Heart left ventricle (tissue), 16 donors: ENCODE measurements at regions of chr10 and their contacts with region 1.

Region 1: DNA sequence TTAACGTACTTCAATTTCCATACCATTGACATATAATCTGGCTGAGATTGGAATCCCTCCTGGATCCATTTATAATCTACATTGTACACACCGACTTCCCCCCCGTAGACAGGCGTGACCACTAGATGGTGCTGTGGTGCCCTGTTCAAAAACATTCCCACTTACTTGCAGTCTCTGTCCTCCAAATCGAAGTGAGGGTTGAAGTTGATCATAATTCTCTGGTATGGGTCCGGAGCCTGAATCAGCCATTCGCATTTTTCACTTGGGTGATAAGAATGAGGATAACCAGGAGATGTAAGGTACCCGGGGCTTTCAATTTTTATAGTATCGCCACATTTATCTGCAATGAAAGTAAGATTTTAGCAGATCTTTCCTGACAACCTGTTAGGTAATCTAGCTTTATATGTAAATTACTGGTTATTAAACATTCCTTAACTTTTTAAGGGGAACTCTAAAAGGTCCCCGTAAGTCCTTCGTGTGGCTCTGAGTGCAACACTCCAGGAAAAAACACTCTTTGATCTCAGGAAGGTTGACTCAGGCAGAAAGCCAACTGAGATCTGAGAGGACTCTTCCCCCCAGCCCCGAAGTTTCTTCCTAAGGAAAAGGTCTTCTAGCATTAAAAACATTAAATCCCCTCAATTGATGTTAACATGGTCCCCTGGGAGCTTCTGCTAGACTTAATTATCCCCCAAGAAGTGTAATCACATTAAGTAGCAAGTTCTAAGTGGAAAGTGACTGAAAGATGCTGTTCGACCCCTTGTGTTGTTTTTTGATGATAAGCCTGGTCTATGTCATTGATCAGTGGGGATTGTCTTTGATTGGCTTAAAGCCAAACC is 3.7 kb downstream of the NRP1 start:
- DNase-seq: peak; percentile 87 to 89 (median 87)
- ATAC-seq: peak; percentile 9 to 35 (median 25)
- H3K4me3 ChIP-seq: peak overlapping the region; percentile 53 to 92 (median 88)
- H3K27ac ChIP-seq: peak overlapping the region in 11 of 12 donors; percentile 95 to 100 (median 98)
- H3K4me1 ChIP-seq: peaks cover 3 to 53% (median 40%) of the 10 kb centered on the region in 12 donors
- H3K27me3 ChIP-seq: no peaks in the 10 kb centered on the region
- CTCF ChIP-seq: peak; percentile 87 to 96 (median 91)
- POLR2A ChIP-seq: no peak

Region 2: GRCh38 chr10:33193057-33193700 is 137.6 kb before region 1 on chr10:
- intact Hi-C with region 1: loop called in 9 of 10 experiments (anchors 2 to 10 kb)
- DNase-seq: peak; percentile 83 to 90 (median 85)
- ATAC-seq: peak; percentile 73 to 86 (median 82)
- H3K4me3 ChIP-seq: no peak overlapping the region
- H3K27ac ChIP-seq: peak overlapping the region; percentile 25 to 75 (median 52)
- H3K4me1 ChIP-seq: peaks cover 4 to 57% (median 41%) of the 10 kb centered on the region in 12 donors
- H3K27me3 ChIP-seq: no peaks in the 10 kb centered on the region
- CTCF ChIP-seq: peak; percentile 66 to 95 (median 83)
- POLR2A ChIP-seq: no peak

Region 3: GRCh38 chr10:33661580-33662336 is 331.0 kb after region 1 on chr10:
- intact Hi-C with region 1: loop called in 3 of 10 experiments (anchors 5 to 10 kb)
- DNase-seq: peak; percentile 69 to 88 (median 82)
- ATAC-seq: peak; percentile 52 to 90 (median 86)
- H3K4me3 ChIP-seq: peak overlapping the region in 3 of 12 donors; percentile 1 to 15 (median 13)
- H3K27ac ChIP-seq: peak overlapping the region in 10 of 12 donors; percentile 7 to 86 (median 28)
- H3K4me1 ChIP-seq: peaks cover 0 to 47% (median 20%) of the 10 kb centered on the region in 12 donors
- H3K27me3 ChIP-seq: no peaks in the 10 kb centered on the region
- CTCF ChIP-seq: no peak
- POLR2A ChIP-seq: no peak

Region 4: DNA sequence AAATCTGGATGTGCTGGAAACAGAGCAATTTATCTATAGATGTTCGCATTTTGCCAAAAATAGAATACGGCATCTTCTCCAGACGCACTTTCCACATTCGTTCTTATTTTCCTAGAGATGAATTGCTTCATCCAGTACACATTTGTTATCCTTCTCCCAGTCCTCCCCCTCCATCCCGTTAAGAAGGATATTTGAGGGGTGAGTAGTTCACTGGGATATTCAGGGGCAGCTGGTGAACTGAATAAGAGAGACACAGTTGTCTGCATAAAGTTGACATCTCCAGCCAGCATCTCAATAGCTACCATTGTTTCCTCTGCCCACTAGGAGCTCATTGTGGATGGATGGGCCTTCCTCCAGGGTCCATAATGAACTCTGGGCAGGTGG is 460.5 kb after region 1 on chr10:
- intact Hi-C with region 1: no loop called
- DNase-seq: no peak
- ATAC-seq: peak in 1 of 4 donors; percentile 88
- H3K4me3 ChIP-seq: no peak overlapping the region
- H3K27ac ChIP-seq: no peak overlapping the region
- H3K4me1 ChIP-seq: peaks cover 0 to 15% (median 0%) of the 10 kb centered on the region in 12 donors
- H3K27me3 ChIP-seq: no peaks in the 10 kb centered on the region
- CTCF ChIP-seq: no peak
- POLR2A ChIP-seq: no peak

Region 5: DNA sequence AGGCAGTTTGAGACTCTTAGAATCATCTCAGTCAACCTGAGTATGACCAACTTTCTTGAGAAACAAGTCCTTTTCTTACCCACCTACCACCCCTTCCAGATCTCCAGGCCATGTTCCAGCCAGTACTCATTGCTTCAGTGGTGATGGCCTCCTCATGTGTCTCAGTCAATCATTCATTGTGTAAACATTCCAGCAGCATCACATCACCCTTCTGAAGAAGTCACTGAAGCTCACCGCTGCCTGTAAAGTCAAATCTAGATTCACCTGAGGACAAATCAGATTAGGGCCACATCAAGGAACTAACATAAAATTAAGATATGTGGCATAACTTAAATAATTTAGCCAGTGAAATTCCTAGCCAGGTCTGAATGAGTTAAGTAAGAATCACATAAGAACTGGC is 471.0 kb after region 1 on chr10:
- intact Hi-C with region 1: loop called in 8 of 10 experiments (anchors 2 to 10 kb)
- DNase-seq: no peak
- ATAC-seq: no peak
- H3K4me3 ChIP-seq: no peak overlapping the region
- H3K27ac ChIP-seq: peak overlapping the region in 1 of 12 donors; percentile 72
- H3K4me1 ChIP-seq: peaks cover 0 to 23% (median 3%) of the 10 kb centered on the region in 12 donors
- H3K27me3 ChIP-seq: no peaks in the 10 kb centered on the region
- CTCF ChIP-seq: no peak
- POLR2A ChIP-seq: no peak

Region 6: DNA sequence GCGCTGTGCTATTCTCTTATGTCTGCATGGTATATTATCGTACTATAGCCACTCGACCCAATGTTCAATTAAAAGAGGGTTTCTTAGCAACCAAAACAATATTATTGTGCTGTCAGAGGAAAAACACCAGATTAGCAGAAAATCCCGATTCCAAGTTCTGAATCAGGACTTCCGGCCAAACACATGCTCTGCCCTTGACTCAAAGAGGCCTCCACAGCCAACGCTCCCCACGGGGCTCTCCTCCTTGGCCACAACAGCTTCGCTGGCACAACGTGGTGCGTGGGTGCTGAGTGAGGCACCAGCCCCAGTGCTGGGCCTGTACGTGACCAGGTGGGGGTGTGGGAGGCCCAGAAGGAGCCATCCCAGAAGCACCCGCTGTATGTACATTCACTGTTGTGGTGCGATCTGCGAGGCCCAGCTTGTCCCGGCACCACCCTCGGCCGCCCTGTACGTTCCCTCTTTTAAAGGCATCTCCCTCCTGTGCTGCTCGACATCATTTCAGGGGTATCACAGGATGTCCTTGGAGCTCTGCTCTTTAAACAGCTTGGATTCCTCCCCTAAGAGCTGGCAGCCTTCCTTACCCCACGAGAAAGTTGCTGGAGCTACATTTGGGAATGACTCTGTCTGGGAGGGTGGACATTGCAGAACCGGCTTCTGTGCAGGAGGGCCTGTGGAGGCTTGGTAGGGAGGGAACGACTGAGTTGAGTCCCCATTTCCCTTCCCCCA is 748.1 kb after region 1 on chr10:
- intact Hi-C with region 1: loop called in 1 of 10 experiments (anchors 2 kb)
- DNase-seq: peak; percentile 44 to 84 (median 76)
- ATAC-seq: peak; percentile 70 to 85 (median 80)
- H3K4me3 ChIP-seq: no peak overlapping the region
- H3K27ac ChIP-seq: peak overlapping the region in 7 of 12 donors; percentile 15 to 70 (median 41)
- H3K4me1 ChIP-seq: peaks cover 0 to 41% (median 12%) of the 10 kb centered on the region in 12 donors
- H3K27me3 ChIP-seq: no peaks in the 10 kb centered on the region
- CTCF ChIP-seq: no peak
- POLR2A ChIP-seq: no peak

Region 7: DNA sequence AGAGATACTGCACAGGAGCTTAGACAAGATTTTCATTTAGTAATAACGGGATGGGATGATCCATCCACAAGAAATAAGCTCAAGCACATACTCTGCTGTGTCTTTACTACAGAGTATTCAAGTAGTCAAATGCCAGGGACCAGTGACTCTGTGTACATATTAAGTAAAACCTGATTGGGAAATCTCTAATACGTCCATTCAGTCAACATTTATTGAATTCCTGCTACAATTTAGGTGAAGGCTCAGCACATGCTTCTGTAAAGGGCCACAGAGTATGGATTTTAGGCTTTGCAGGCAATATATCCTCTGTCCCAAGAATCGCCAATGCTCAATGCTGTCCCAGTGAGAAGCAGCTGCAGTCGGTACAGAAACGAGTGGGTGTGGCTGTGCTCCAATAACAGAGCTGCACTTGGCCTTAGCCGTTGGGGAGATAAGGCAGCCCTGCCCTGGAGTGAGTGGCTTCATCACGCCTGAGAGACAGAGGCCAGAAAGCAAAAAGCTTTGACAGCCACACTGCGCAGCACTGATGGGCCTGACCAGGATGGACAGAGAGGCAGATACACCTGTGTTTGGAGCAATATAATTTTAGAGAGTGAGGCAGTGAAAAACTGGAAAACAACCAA is 1297.5 kb after region 1 on chr10:
- intact Hi-C with region 1: loop called in 2 of 10 experiments (anchors 5 to 10 kb)
- DNase-seq: peak; percentile 76 to 89 (median 81)
- ATAC-seq: peak; percentile 90 to 98 (median 96)
- H3K4me3 ChIP-seq: no peak overlapping the region
- H3K27ac ChIP-seq: peak overlapping the region in 1 of 12 donors; percentile 26
- H3K4me1 ChIP-seq: peaks cover 0 to 34% (median 12%) of the 10 kb centered on the region in 12 donors
- H3K27me3 ChIP-seq: no peaks in the 10 kb centered on the region
- CTCF ChIP-seq: no peak
- POLR2A ChIP-seq: no peak